BJ (cell line): ENCODE measurements at regions of chr6 and their contacts with region 1.

Region 1: GRCh38 chr6:30717042-30717844 is at the start of gene MDC1:
- DNase-seq: peak; percentile 99
- H3K4me3 ChIP-seq: peak within 1 kb of the TSS; percentile 63
- H3K27me3 ChIP-seq: no peaks in the 10 kb centered on the region
- CTCF ChIP-seq: peak; percentile 40
- polyA plus RNA-seq, gene MDC1: 5.1 and 7.5 TPM in 2 replicates

Region 2: GRCh38 chr6:30672445-30673253 is 44.6 kb before region 1 on chr6 and contains the start of gene DHX16:
- CTCF ChIA-PET with region 1: interaction called, 387 read pairs
- POLR2A ChIA-PET with region 1: interaction called, 3 read pairs
- DNase-seq: peak; percentile 85
- H3K4me3 ChIP-seq: peak within 1 kb of the TSS; percentile 88
- H3K27me3 ChIP-seq: no peaks in the 10 kb centered on the region
- CTCF ChIP-seq: peak; percentile 88
- polyA plus RNA-seq, gene DHX16: 25.1 and 44.5 TPM in 2 replicates

Region 3: DNA sequence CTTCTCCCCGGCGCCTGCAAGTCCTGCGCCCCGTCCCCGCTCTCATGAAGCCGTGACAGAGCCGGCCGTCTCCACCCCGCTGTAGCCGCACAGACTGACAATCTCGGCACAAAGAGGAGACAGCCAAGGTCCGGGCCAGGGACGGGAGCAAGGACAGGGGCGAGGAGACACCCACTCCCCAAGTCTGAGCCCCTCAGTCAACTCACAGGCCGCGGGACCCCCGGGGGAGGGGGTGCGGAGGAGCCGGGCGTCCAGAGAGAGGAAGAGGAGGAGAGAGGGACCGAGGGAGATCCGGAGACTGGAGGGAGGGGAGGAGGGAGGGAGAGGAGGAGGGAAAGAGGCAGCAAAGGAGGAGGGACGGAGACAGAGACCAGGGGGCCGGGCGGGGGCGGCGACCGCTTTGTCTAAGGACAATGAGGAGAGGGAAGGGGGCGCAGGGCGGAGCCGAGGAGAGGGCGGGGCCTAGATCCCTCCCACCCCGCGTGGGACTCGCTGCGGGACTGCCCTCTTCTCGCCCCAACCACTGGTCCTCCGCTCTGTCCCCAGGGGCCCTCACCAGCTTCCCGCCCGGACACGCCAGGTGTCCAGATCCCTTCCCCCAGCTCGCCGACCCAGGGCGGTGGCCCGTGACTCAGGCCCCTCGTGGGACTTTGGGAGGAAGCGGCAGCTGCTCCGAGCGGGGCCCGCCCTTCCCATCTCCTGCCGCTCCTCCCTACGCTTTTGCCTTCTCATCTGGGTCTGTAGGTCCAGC is 30.2 kb before region 1 on chr6:
- CTCF ChIA-PET with region 1: interaction called, 387 read pairs
- POLR2A ChIA-PET with region 1: interaction called, 4 read pairs
- DNase-seq: peak; percentile 88
- H3K4me3 ChIP-seq: peak overlapping the region; percentile 87
- H3K27me3 ChIP-seq: no peaks in the 10 kb centered on the region
- CTCF ChIP-seq: no peak

Region 4: GRCh38 chr6:30730601-30731435 is 13.6 kb after region 1 on chr6:
- CTCF ChIA-PET with region 1: interaction called, 24 read pairs
- POLR2A ChIA-PET with region 1: no interaction called
- DNase-seq: no peak
- H3K4me3 ChIP-seq: no peak overlapping the region
- H3K27me3 ChIP-seq: no peaks in the 10 kb centered on the region
- CTCF ChIP-seq: peak; percentile 45; the same call in 1 of the 2 replicates

Region 5: DNA sequence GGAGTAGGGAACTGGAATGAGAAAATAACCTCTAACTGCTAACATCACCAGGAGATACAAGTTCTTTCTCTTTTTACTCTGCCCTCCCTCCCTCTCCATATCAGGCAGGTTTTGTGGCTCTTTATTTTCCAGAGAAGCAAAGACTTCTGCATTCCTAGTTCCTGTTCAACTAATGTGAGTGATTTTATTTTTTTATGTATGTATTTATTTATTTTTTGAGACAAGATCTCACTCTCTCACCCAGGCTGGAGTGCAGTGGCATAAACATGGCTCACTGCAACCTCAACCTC is 33.1 kb after region 1 on chr6:
- CTCF ChIA-PET with region 1: no interaction called
- POLR2A ChIA-PET with region 1: no interaction called
- DNase-seq: no peak
- H3K4me3 ChIP-seq: no peak overlapping the region
- H3K27me3 ChIP-seq: no peaks in the 10 kb centered on the region
- CTCF ChIP-seq: no peak

Region 6: GRCh38 chr6:30844091-30844535 is 126.9 kb after region 1 on chr6:
- CTCF ChIA-PET with region 1: interaction called, 7 read pairs
- POLR2A ChIA-PET with region 1: interaction called, 11 read pairs
- DNase-seq: no peak
- H3K4me3 ChIP-seq: no peak overlapping the region
- H3K27me3 ChIP-seq: no peaks in the 10 kb centered on the region; the same call in 1 of the 2 replicates
- CTCF ChIP-seq: 0 out of 2 replicates have a peak, but pooled peaks have one; percentile 21

Region 7: GRCh38 chr6:30883685-30884520 is 166.7 kb after region 1 on chr6 and contains the start of gene DDR1:
- CTCF ChIA-PET with region 1: interaction called, 18 read pairs
- POLR2A ChIA-PET with region 1: no interaction called
- DNase-seq: no peak
- H3K4me3 ChIP-seq: peak within 1 kb of the TSS; percentile 60
- H3K27me3 ChIP-seq: no peaks in the 10 kb centered on the region
- CTCF ChIP-seq: no peak
- polyA plus RNA-seq, gene DDR1: 10.6 and 17.0 TPM in 2 replicates